ENCODE measurements at regions of chr2 and their contacts with region 1.

Region 1: DNA sequence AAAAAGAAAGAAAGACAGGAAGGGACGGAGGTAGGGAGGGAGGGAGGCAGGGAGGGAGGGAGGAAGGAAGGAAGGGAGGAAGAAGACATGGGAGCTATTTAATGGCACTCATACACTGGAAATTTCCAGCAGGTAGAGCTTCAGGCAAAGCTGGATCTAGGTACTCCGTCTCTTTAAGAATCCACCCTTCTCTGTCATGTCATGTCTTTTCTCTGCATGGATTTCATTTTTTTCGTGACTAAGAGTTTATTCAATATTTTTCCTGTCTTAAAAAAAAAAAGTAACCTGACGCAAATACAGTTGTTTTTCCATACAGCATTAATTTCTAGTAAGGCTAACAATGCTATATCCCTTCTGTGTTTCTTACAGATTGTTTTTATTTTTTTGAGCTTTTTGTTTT is 56.3 kb upstream of the MCFD2 start:
- DNase-seq: no peak
- H3K4me3 ChIP-seq: no peak overlapping the region
- H3K27ac ChIP-seq: no peak overlapping the region
- H3K4me1 ChIP-seq: peaks cover 0 to 57% (median 9%) of the 10 kb centered on the region in 4 experiments
- H3K27me3 ChIP-seq: no peaks in the 10 kb centered on the region

Region 2: DNA sequence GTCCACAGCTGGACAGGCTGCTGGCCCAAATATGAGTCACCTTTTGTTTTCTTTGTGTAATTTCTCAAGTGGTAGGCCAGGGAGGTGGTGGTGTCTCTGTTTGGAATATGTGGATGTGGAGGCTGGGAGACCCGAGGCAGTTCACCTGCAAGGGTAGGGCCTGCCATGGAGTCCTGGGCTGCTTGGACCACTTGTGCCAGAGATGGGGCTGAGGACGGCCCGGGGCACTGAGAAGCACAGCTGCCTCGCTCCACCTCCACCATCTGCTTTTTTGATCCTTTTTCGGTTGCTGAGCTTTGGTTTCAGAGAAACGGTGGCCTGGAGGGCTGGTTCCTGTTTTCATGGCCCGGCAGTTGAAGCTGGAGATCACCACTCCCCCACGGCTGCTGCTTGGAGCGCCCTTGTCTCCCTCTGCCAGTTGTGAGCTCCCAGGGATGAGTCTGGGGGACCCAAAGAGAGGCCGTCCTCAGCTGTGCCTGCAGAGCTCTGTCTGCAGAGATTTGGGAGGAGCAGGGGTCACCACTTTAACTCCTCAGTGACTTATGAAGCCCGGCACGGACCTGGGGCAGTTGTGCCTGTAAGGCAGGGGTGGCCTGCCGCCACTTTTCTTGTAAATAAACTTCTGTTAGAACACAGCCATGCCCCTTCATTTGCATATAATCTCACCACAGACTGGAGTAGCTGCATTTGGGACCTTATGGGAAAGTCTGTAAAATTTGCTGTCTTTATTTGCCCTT is 11.3 kb after region 1 on chr2:
- CTCF ChIA-PET with region 1: interaction called, 27 read pairs
- POLR2A ChIA-PET with region 1: interaction called, 3 read pairs
- DNase-seq: peak; percentile 59 to 90 (median 87)
- H3K4me3 ChIP-seq: peak overlapping the region in 4 of 7 experiments; percentile 15 to 46 (median 37)
- H3K27ac ChIP-seq: peak overlapping the region; percentile 34 to 83
- H3K4me1 ChIP-seq: peaks cover 25 to 95% (median 90%) of the 10 kb centered on the region in 4 experiments
- H3K27me3 ChIP-seq: no peaks in the 10 kb centered on the region

Region 3: GRCh38 chr2:47072018-47072691 is 100.2 kb after region 1 on chr2:
- CTCF ChIA-PET with region 1: no interaction called
- POLR2A ChIA-PET with region 1: no interaction called
- DNase-seq: peak in 2 of 3 donors; percentile 29 to 44
- H3K4me3 ChIP-seq: peak overlapping the region in 2 of 7 experiments; percentile 9 to 33
- H3K27ac ChIP-seq: no peak overlapping the region
- H3K4me1 ChIP-seq: peaks cover 0 to 61% (median 45%) of the 10 kb centered on the region in 4 experiments
- H3K27me3 ChIP-seq: no peaks in the 10 kb centered on the region